ENCODE measurements at regions of chr6 and their contacts with region 1.

Region 1: GRCh38 chr6:111445861-111446267 is 37.2 kb downstream of the REV3L start:
- DNase-seq: no peak

Region 2: DNA sequence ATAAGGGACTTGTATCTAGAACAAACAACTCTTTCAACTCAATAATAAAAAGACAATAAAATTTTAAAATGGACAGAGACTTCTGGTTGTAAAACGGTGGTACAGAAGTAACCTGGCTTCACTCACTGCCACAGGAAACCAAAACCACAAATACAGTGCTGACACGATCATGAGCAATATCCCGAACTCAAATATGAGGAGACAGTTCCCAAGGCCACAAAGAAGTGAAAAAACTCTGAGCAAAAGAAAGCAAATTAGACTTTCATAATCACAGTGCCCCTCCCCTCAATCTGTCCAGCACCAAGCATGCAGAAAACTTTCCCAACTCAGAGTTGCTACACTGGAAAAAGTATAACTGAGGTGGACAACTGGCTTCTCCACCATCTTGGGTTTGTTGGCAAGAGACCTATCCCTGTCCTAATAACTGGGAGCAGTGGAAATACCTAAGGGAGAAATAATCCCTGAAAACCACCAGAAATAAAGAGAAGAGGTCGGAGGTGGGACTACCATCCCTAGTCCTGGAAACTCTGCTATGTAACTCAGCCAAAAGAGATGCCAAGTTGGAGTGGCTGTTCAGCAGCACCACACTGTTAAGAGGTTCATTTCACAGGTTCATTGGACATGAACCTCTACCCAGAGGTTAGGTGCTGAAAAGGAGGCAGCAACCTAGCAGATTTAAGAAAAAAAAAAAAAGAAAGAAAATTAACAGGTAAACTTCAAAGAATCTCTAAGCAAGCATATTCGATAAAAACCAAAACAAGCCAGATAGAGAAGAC is 18.3 kb before region 1 on chr6:
- intact Hi-C with region 1: no loop called
- DNase-seq: no peak

Region 3: GRCh38 chr6:111462770-111463391 is 17.0 kb after region 1 on chr6:
- intact Hi-C with region 1: loop called in 1 of 2 experiments (anchors 1 kb)
- DNase-seq: no peak

Region 4: GRCh38 chr6:111483736-111484632 is 38.1 kb after region 1 on chr6:
- intact Hi-C with region 1: no loop called
- DNase-seq: peak; percentile 98

Region 5: DNA sequence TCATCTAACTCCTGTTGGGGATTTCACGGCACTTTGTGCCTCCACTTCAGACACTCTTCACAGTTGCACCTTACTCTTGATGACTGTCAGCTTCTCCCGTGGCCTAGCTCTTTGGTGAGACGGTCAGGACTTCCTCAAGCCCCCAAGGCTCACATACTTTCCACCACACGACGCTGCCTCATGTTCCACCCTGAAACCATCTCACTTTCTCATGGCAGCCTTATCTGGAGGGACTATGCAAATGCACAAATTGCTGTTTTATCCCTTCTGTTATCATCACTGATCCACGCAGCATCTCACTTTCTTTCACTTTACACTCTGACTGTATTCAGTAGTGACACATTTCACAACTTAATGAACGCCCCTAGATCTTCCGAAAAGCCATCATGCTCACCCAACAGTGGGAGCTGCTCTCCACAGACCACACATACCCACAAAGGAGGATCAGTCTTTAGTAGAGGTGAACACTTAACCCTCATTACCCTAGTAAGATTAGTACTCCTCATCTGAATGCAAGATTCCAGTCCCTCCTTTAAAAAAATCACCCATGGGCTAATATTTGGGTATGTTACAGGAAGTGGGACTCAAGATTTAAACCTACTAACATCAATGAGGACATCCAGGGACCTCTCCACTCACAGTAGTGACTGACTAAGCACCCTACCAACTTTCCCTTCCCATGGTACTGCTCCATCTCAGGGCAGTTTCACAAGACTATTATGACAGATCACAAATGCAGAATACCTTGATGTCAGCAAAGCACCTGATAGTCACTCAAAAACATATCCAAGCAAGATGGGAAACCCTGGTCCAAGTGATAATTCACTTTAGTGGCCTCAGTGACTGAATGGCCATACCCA is 392.0 kb after region 1 on chr6:
- intact Hi-C with region 1: no loop called
- DNase-seq: no peak

Measured in posterior vena cava (tissue), 2 donors.